GM12878 (cell line): ENCODE measurements at regions of chr1 and their contacts with region 1.

Region 1: DNA sequence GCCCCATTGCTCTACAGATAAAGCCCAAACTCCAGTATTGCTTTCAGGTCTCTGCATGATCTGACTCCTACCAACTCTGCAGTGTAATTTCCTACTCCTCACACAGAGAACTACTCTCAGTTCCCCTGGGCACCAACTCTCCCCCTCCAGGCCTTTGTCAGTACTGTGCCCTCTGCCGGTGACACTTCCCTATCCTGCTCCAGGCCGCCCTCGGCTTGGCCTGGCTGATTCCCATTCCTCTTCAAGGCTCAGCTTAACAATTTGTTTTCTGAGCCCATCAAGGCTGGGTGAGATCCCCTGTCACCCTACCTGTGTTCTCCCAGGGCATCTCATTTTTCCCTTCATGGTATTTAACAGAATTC is 2.6 kb downstream of the SLAMF8 start:
- DNase-seq: peak; percentile 40
- ATAC-seq: peak; percentile 94
- H3K4me3 ChIP-seq: no peak overlapping the region
- H3K27ac ChIP-seq: no peak overlapping the region
- H3K4me1 ChIP-seq: peaks cover 35% of the 10 kb centered on the region
- H3K27me3 ChIP-seq: no peaks in the 10 kb centered on the region
- CTCF ChIP-seq: peak; percentile 46 to 71 (median 66)
- EP300 ChIP-seq: no peak
- POLR2A ChIP-seq: no peak
- RAD21 ChIP-seq: 0 out of 2 replicates have a peak, but pooled peaks have one; percentile 26

Region 2: DNA sequence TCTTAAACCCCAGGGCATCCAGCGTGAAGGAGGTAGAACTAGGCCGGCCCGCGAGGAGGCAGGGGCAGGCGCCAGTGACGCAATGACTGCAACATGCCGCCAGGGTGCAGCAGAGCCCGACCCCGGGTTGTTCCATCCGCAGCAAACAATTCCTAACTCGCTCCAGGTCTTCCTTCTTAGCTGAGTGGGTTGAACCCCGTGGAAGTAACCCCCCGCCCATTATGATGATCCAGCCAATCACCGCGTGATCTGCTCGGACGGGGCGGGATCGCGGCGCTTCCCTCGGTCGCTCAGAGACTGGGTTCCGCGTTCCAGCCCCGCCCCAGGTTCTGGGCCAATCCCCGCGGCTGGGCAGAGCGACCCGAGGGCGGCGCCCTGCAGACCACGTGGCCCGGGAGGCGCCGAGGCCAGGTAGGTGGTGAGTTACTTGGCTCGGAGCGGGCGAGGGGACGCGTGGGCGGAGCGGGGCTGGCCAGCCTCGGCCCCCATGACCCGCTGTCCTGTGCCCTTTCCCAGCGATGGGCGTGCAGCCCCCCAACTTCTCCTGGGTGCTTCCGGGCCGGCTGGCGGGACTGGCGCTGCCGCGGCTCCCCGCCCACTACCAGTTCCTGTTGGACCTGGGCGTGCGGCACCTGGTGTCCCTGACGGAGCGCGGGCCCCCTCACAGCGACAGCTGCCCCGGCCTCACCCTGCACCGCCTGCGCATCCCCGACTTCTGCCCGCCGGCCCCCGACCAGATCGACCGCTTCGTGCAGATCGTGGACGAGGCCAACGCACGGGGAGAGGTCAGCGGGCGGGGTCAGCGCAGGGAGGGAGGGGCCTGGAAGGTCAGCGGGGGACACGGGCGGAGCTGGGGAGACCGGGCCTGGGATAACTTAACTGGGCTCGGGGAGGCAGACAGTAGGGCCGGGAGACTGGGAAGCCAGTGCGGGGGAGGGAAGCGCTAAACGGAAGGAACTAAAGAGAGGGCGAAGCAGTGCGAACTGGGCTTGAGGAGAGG is 48.4 kb before region 1 on chr1 and contains the start of gene DUSP23:
- CTCF ChIA-PET with region 1: no interaction called
- POLR2A ChIA-PET with region 1: no interaction called
- RAD21 ChIA-PET with region 1: no interaction called
- SMC1A ChIA-PET with region 1: no interaction called
- in situ Hi-C with region 1: no loop called
- intact Hi-C with region 1: loop called (anchors 5 kb)
- DNase-seq: peak; percentile 81
- ATAC-seq: peak; percentile 100
- H3K4me3 ChIP-seq: peak within 1 kb of the TSS; percentile 29
- H3K27ac ChIP-seq: no peak within 1 kb of the TSS
- H3K4me1 ChIP-seq: no peaks in the 10 kb centered on the region
- H3K27me3 ChIP-seq: no peaks in the 10 kb centered on the region
- CTCF ChIP-seq: peak; percentile 78 to 81 (median 81)
- EP300 ChIP-seq: no peak
- POLR2A ChIP-seq: peak; percentile 76
- RAD21 ChIP-seq: peak; percentile 44; the same call in 1 of the 2 replicates
- polyA plus RNA-seq, gene DUSP23: 1.1 TPM in 1 of 2 experiments, not detected in the other

Region 3: DNA sequence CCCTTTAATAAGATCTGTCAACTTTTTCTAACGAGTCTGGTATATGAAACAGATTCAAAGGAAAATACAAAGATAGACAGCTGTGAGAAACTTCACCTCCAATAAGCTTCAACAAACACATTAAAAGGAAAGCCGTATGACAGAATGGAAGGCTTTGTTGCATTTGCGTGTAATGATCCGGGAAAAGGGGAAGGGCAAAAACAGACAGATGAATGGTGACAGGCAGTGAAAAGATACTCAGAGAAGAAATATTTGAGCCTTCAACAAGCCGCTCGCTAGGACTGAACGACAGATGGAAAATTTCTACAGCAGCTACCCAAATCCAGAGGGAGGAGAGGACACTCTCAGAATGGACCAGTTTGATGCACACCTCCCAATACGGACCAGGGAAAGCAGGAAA is 498.9 kb after region 1 on chr1:
- CTCF ChIA-PET with region 1: no interaction called
- POLR2A ChIA-PET with region 1: no interaction called
- RAD21 ChIA-PET with region 1: no interaction called
- SMC1A ChIA-PET with region 1: no interaction called
- in situ Hi-C with region 1: no loop called
- intact Hi-C with region 1: no loop called
- DNase-seq: no peak
- ATAC-seq: no peak
- H3K4me3 ChIP-seq: no peak overlapping the region
- H3K27ac ChIP-seq: no peak overlapping the region
- H3K4me1 ChIP-seq: no peaks in the 10 kb centered on the region
- H3K27me3 ChIP-seq: no peaks in the 10 kb centered on the region
- CTCF ChIP-seq: no peak
- EP300 ChIP-seq: no peak
- POLR2A ChIP-seq: no peak
- RAD21 ChIP-seq: no peak